A673 (cell line): ENCODE measurements at regions of chr4 and their contacts with region 1.

Region 1: DNA sequence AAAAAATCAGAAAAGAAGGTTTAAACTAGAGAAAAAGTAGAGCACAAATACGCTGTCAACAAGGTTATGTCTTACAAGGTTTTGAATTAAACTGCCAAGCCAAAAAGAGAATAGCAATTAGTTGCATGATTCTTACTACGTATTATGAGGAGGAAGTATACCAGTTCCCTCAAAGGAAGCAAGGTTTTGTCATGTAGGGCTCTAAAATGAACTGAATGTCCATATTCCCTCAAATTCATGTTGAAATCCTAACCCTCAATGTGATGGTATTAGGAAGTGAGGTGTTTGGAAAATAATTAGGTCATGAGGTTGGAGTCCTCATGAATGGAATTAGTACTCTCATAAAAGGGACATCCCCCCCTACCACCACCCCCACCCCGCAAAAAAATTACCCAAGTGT is 201.0 kb downstream of the FBXW7 start:
- DNase-seq: no peak
- H3K4me3 ChIP-seq: no peak overlapping the region
- H3K27ac ChIP-seq: no peak overlapping the region
- H3K4me1 ChIP-seq: no peaks in the 10 kb centered on the region
- H3K27me3 ChIP-seq: no peaks in the 10 kb centered on the region
- CTCF ChIP-seq: no peak

Region 2: GRCh38 chr4:152408514-152409327 is 73.8 kb after region 1 on chr4:
- CTCF ChIA-PET with region 1: interaction called, 18 read pairs
- POLR2A ChIA-PET with region 1: no interaction called
- intact Hi-C with region 1: no loop called
- DNase-seq: peak; percentile 71
- H3K4me3 ChIP-seq: no peak overlapping the region
- H3K27ac ChIP-seq: no peak overlapping the region
- H3K4me1 ChIP-seq: peaks cover 10% of the 10 kb centered on the region
- H3K27me3 ChIP-seq: no peaks in the 10 kb centered on the region
- CTCF ChIP-seq: peak; percentile 78